ENCODE measurements at regions of chr1 and their contacts with region 1.

Region 1: DNA sequence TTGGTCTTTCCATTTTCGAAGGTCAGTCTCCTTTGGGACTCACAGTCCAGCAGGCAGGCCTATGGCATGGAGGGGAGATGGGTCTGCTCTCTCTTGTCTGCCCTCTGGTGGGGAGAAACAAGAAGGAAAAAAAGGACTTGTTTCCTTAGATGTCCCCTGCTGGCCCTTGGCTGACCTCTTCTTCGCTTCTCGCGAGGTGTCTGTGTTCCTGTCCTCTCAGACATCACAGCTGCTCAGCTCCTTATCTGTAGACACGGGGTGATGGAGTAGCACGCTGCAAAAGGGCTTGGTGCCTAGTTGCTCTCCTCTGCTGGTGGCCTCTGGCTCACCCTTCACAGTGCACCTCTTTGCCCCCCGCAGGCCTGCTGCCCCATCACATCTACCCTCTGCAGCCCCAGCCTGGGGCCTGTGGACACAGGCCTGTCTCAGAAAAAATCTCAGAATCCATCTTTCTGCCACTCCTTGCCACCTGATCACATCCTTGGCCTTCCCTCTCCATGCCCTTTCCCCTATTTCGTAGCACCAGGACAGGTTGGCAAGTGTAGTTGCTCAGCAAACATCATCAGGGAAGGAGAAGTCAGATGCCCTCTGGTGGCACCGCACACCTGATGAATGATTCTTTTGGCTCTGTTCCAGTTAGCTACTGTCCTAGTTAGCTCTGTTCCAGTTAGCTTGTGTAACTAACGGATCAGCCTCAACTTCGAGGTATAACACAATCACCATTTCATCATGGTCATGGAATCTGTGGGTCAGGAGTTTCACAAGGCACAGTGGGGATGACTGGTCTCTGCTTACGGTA is 18.7 kb upstream of the AK2 start:
- DNase-seq: peak; percentile 81 to 94 (median 84)
- ATAC-seq: peak; percentile 97
- H3K4me3 ChIP-seq: no peak overlapping the region
- H3K27ac ChIP-seq: no peak overlapping the region
- H3K4me1 ChIP-seq: peaks cover 4 to 12% of the 10 kb centered on the region in 2 experiments; a peak in 3 of 5 replicates
- H3K27me3 ChIP-seq: peaks cover 7 to 9% of the 10 kb centered on the region in 2 experiments; a peak in 2 of 5 replicates
- CTCF ChIP-seq: peak; percentile 93 to 96 (median 94)
- EP300 ChIP-seq: peak; percentile 20
- POLR2A ChIP-seq: no peak
- RAD21 ChIP-seq: peak; percentile 88 to 94

Region 2: GRCh38 chr1:32933742-32934322 is 121.6 kb before region 1 on chr1:
- CTCF ChIA-PET with region 1: interaction called, 13 read pairs
- POLR2A ChIA-PET with region 1: interaction called, 3 read pairs
- in situ Hi-C with region 1: no loop called
- intact Hi-C with region 1: loop called (anchors 1 kb)
- DNase-seq: peak in 1 of 4 experiments; percentile 27
- ATAC-seq: peak; percentile 25; the same call in 2 of the 3 replicates
- H3K4me3 ChIP-seq: no peak overlapping the region
- H3K27ac ChIP-seq: no peak overlapping the region
- H3K4me1 ChIP-seq: peaks cover 0 to 6% of the 10 kb centered on the region in 2 experiments; a peak in 3 of 5 replicates
- H3K27me3 ChIP-seq: peaks cover 4 to 5% of the 10 kb centered on the region in 2 experiments; a peak in 3 of 5 replicates
- CTCF ChIP-seq: no peak
- EP300 ChIP-seq: no peak
- POLR2A ChIP-seq: no peak
- RAD21 ChIP-seq: no peak

Region 3: DNA sequence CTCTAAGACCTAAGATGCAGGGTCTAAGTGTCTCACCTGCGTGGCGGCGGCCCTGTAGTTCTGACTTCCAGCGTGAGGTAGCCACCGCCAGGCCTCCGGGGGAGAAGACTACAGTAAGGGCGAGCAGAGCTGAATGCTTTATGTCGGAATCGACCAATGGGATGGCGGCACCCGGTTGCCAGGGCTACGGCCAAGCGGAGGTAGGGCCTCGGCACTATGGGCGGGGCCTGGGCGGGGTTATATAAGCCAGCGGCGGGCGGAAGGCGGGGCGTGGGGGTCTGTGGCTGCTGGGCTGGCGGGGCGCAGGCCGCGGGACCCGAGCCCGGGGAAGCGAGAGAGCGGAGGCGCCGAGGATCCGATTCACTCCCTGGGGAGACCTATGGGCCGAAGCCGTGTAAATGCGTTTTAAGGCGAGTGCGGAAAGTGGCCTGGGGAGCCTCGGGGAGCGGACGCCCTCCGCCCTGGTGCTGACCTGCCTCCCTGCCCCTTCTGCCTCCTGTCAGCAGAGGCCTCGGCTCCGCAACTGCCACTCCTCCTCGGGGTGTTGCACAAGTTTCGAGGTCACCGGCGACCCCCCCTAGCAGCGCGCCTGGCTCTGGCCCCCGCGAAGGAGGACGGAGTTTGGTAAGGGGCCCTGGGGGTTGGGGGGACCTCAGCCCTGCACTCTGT is 25.6 kb after region 1 on chr1 and contains the start of gene AZIN2:
- CTCF ChIA-PET with region 1: no interaction called
- POLR2A ChIA-PET with region 1: interaction called, 3 read pairs
- in situ Hi-C with region 1: no loop called
- intact Hi-C with region 1: loop called (anchors 2 kb)
- DNase-seq: peak; percentile 96 to 100 (median 100)
- ATAC-seq: peak; percentile 99
- H3K4me3 ChIP-seq: peak within 1 kb of the TSS; percentile 49
- H3K27ac ChIP-seq: no peak within 1 kb of the TSS
- H3K4me1 ChIP-seq: peaks cover 14% of the 10 kb centered on the region in 2 experiments; a peak in 4 of 5 replicates
- H3K27me3 ChIP-seq: peaks cover 19 to 36% of the 10 kb centered on the region in 2 experiments
- CTCF ChIP-seq: no peak
- EP300 ChIP-seq: no peak
- POLR2A ChIP-seq: peak; percentile 61
- RAD21 ChIP-seq: no peak
- polyA plus RNA-seq, gene AZIN2: not detected

Measured in K562 (cell line).